Endothelial cell of umbilical vein (primary cell): ENCODE measurements at regions of chr3 and their contacts with region 1.

Region 1: GRCh38 chr3:155701882-155702465 is 42.9 kb downstream of the PLCH1 start:
- DNase-seq: peak; percentile 48
- H3K4me3 ChIP-seq: no peak overlapping the region
- H3K27ac ChIP-seq: no peak overlapping the region
- H3K4me1 ChIP-seq: no peaks in the 10 kb centered on the region
- H3K27me3 ChIP-seq: peaks cover 4 to 10% of the 10 kb centered on the region in 2 experiments
- CTCF ChIP-seq: peak; percentile 26 to 30
- POLR2A ChIP-seq: no peak

Region 2: DNA sequence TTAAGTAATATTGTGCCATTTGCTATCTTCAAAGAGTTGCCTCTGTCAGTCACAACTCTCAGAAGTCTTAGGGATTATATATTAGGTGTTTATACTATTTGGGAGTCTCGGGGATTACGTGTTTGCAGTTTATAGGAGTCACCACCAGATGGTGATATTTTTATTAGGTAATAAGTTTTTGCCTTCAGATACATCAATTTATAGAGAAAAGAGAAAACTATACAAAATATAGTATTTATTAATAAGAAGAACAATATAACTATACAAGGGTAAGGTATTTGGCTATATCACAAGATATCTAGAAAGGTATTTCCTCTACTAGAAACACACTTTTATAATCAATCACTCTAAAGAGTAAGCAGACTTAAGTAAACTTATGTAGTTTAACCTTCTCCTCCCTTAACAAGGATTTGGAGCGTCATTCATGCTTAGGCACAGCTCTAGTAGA is 1367.0 kb before region 1 on chr3:
- CTCF ChIA-PET with region 1: interaction called, 35 read pairs
- POLR2A ChIA-PET with region 1: no interaction called
- dilution Hi-C with region 1: no loop called
- intact Hi-C with region 1: loop called (anchors 5 kb)
- DNase-seq: peak; percentile 63
- H3K4me3 ChIP-seq: no peak overlapping the region
- H3K27ac ChIP-seq: no peak overlapping the region
- H3K4me1 ChIP-seq: no peaks in the 10 kb centered on the region
- H3K27me3 ChIP-seq: peaks cover 7 to 27% of the 10 kb centered on the region in 2 experiments
- CTCF ChIP-seq: peak; percentile 19 to 22
- POLR2A ChIP-seq: no peak

Region 3: DNA sequence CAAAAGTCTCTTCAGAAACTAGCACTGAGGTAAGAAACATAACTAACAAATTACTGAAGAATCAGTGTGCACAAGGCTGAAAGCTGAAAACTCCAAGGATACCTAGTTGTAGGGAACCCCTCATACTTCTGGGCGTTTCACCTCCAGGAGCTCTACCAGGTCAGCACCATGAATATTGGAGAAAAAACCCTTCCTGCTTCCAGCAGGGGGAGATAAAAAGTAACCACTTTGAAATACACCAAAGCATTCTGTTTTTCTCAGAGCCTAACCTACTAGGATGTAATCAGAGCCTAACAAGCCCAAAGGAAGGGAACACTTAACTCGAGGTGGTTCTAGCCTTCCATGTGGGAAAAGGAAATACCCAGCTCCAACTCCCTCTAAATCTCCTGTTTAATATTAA is 797.6 kb before region 1 on chr3:
- CTCF ChIA-PET with region 1: interaction called, 16 read pairs
- POLR2A ChIA-PET with region 1: no interaction called
- dilution Hi-C with region 1: no loop called
- intact Hi-C with region 1: no loop called
- DNase-seq: peak; percentile 34
- H3K4me3 ChIP-seq: no peak overlapping the region
- H3K27ac ChIP-seq: no peak overlapping the region
- H3K4me1 ChIP-seq: no peaks in the 10 kb centered on the region
- H3K27me3 ChIP-seq: peaks cover 0 to 1% of the 10 kb centered on the region in 2 experiments
- CTCF ChIP-seq: peak in 1 of 2 donors; percentile 34
- POLR2A ChIP-seq: no peak

Region 4: DNA sequence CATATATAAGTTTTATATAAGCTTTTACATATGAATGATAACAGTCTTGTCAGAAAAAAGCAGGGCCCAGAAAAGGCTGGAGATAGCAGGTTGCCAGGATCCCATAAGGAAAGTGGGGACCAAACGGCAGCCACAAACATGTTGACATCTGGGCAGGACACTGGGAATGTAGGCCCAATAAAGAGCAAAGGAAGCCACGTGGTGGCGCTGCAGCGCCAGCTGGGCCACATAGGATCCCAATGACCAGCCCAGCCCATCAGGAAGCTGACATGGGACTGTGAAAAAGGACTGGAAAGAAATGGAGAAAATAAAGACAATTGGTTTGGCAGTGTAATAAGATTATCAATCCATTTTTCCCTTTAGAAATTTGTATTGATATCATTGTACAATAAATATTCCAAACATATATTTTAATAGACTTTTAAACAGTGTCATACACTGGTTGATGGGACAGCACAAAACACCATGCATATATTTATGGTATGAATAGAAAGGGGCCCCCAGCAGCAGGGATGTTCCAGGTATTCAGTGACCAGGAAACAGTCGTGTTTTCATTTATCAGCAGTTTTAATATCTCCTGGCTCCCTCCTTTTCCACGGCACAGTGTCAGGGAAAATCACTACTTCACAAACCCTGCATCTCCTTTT is 319.5 kb before region 1 on chr3:
- CTCF ChIA-PET with region 1: interaction called, 35 read pairs
- POLR2A ChIA-PET with region 1: no interaction called
- dilution Hi-C with region 1: no loop called
- intact Hi-C with region 1: loop called (anchors 1 kb)
- DNase-seq: peak; percentile 50
- H3K4me3 ChIP-seq: no peak overlapping the region
- H3K27ac ChIP-seq: no peak overlapping the region
- H3K4me1 ChIP-seq: no peaks in the 10 kb centered on the region
- H3K27me3 ChIP-seq: no peaks in the 10 kb centered on the region
- CTCF ChIP-seq: peak; percentile 61 to 69
- POLR2A ChIP-seq: no peak

Region 5: DNA sequence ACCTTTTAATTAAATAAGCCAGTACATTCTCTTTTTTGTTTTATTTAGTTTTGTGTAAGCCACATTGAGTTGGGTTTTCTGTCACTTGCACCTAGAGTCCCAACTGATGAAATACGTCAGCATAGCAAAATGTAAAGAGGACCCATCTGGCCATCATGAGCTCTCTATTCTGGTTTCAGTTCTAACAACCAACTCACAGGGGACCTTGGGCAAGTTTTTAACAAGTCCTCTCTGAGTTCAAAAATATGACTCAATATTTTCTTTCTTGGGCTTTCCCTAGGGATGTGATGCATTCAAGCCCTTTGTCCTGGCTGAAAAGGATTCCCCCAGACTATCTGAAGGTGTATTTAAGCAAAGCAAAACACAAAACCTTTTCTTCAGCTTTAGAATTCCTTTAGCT is 10.0 kb after region 1 on chr3:
- CTCF ChIA-PET with region 1: interaction called, 33 read pairs
- POLR2A ChIA-PET with region 1: no interaction called
- dilution Hi-C with region 1: no loop called
- intact Hi-C with region 1: no loop called
- DNase-seq: no peak
- H3K4me3 ChIP-seq: no peak overlapping the region
- H3K27ac ChIP-seq: no peak overlapping the region
- H3K4me1 ChIP-seq: no peaks in the 10 kb centered on the region
- H3K27me3 ChIP-seq: no peaks in the 10 kb centered on the region
- CTCF ChIP-seq: no peak
- POLR2A ChIP-seq: no peak